Activated B cell treated with CpG ODN at 0.5 μM for 24 hours (primary cell): ENCODE measurements at regions of chr4 and their contacts with region 1.

Region 1: DNA sequence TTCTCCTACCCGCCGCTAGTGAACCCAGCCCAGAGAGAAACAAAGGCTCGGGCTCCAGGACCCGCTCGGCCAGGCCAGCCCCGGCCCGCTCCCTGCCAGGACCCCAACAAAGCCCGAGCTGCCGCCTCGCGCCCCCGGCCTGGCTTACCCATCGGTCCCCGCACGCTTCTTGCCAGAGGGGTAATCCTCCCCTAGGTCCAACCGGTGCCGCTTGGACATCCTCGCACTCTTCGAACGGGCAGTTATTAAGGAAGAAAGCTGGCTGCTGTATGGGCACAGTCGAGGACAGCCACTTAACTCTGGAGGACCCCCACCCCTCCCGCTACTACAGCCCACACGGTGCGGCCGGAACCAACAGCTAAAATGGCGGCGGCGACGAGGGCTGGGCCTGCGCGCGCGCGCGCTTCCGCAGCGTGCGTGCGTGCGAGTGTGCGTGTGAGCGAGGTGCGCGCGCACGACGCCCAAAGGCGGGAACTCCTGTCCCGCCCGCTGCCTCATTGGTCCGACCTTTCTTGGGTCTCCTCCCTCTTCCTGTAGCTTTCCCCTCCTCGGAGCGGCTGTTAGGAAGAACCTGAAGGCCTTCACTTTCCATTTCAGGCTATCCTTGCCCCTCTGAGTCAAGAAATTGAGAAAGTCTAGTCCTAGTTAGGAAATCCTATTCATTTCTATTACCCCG is at the start of gene DHX15:
- DNase-seq: peak; percentile 88
- ATAC-seq: peak; percentile 93
- H3K4me3 Mint-ChIP-seq: peak within 1 kb of the TSS; percentile 98
- H3K27ac Mint-ChIP-seq: peak within 1 kb of the TSS; percentile 91
- H3K4me1 Mint-ChIP-seq: peaks cover 39% of the 10 kb centered on the region
- H3K27me3 Mint-ChIP-seq: no peaks in the 10 kb centered on the region
- CTCF ChIP-seq: no peak
- total RNA-seq, gene DHX15: 145 and 163 TPM in 2 replicates

Region 2: GRCh38 chr4:24472514-24473308 is 111.6 kb before region 1 on chr4:
- CTCF ChIA-PET with region 1: no interaction called
- POLR2A ChIA-PET with region 1: no interaction called
- intact Hi-C with region 1: loop called (anchors 1 kb)
- DNase-seq: peak; percentile 39
- ATAC-seq: peak; percentile 75
- H3K4me3 Mint-ChIP-seq: peak overlapping the region; percentile 93
- H3K27ac Mint-ChIP-seq: peak overlapping the region; percentile 62
- H3K4me1 Mint-ChIP-seq: peaks cover 35% of the 10 kb centered on the region
- H3K27me3 Mint-ChIP-seq: peaks cover 57% of the 10 kb centered on the region
- CTCF ChIP-seq: no peak

Region 3: DNA sequence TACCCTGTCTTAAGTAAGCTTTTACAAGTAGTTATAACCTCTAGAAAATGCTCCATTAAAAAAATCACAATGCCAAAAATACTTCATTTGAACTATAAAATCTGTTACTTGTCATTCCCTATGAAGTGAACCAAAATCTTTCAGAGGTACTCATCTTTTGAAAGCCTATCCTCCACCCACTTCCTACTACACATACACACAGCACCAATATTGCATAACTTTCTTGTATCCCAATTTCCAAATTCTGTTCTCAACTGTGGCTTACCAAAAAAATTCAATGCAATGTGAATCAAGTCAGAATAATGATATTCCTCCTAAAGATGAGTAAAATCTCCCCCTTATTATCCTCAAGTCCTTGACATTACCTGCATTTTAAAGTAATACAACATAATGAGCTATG is 15.9 kb before region 1 on chr4:
- CTCF ChIA-PET with region 1: no interaction called
- POLR2A ChIA-PET with region 1: interaction called, 7 read pairs
- intact Hi-C with region 1: loop called (anchors 2 kb)
- DNase-seq: no peak
- ATAC-seq: no peak
- H3K4me3 Mint-ChIP-seq: no peak overlapping the region
- H3K27ac Mint-ChIP-seq: no peak overlapping the region
- H3K4me1 Mint-ChIP-seq: peaks cover 56% of the 10 kb centered on the region
- H3K27me3 Mint-ChIP-seq: no peaks in the 10 kb centered on the region
- CTCF ChIP-seq: no peak

Region 4: GRCh38 chr4:24664956-24665355 is 80.6 kb after region 1 on chr4:
- CTCF ChIA-PET with region 1: no interaction called
- POLR2A ChIA-PET with region 1: no interaction called
- intact Hi-C with region 1: no loop called
- DNase-seq: no peak
- ATAC-seq: no peak
- H3K4me3 Mint-ChIP-seq: no peak overlapping the region
- H3K27ac Mint-ChIP-seq: no peak overlapping the region
- H3K4me1 Mint-ChIP-seq: no peaks in the 10 kb centered on the region
- H3K27me3 Mint-ChIP-seq: peaks cover 22% of the 10 kb centered on the region
- CTCF ChIP-seq: no peak

Region 5: GRCh38 chr4:25234390-25235370 is 650.4 kb after region 1 on chr4:
- CTCF ChIA-PET with region 1: no interaction called
- POLR2A ChIA-PET with region 1: interaction called, 6 read pairs
- intact Hi-C with region 1: loop called (anchors 1 kb)
- DNase-seq: no peak
- ATAC-seq: peak; percentile 53
- H3K4me3 Mint-ChIP-seq: peak overlapping the region; percentile 90
- H3K27ac Mint-ChIP-seq: peak overlapping the region; percentile 95
- H3K4me1 Mint-ChIP-seq: peaks cover 47% of the 10 kb centered on the region
- H3K27me3 Mint-ChIP-seq: no peaks in the 10 kb centered on the region
- CTCF ChIP-seq: no peak

Region 6: DNA sequence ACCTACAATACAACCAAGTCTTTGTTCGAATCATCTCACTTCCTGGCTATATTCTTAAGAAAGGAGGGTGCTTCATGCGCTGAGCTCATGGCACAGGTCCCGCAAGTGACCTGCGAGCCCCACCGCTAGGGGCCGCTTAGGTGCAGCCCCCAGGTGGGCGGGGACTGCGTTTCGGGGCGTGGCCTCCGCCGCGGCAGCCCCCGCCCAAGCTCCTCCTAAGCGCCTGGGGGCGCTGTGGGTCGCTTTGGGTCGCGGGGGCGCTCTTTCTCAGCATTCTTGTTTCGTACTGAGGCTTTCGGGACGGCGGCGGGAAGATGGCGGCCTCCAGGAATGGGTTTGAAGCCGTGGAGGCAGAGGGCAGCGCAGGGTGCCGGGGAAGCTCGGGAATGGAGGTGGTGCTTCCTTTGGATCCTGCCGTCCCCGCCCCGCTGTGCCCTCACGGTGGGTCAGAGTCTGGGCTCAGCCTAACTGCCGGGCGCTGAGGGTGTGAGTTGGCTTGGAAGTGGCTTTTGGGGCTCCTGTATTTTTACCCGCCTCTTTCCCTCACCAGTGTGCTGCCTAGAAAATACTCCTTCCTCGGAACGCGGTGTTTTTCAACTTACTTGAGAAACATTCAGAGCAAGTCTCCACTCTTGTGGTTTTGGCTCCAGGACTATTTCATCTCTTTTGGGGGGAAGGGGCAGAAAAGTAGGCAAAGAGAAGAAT is 728.3 kb after region 1 on chr4 and contains the start of gene ZCCHC4:
- CTCF ChIA-PET with region 1: no interaction called
- POLR2A ChIA-PET with region 1: interaction called, 11 read pairs
- intact Hi-C with region 1: loop called (anchors 1 kb)
- DNase-seq: peak; percentile 95
- ATAC-seq: peak; percentile 99
- H3K4me3 Mint-ChIP-seq: peak within 1 kb of the TSS; percentile 98
- H3K27ac Mint-ChIP-seq: peak within 1 kb of the TSS; percentile 95
- H3K4me1 Mint-ChIP-seq: peaks cover 45% of the 10 kb centered on the region
- H3K27me3 Mint-ChIP-seq: no peaks in the 10 kb centered on the region
- CTCF ChIP-seq: peak; percentile 90
- total RNA-seq, gene ZCCHC4: 14.7 and 19.1 TPM in 2 replicates

Region 7: DNA sequence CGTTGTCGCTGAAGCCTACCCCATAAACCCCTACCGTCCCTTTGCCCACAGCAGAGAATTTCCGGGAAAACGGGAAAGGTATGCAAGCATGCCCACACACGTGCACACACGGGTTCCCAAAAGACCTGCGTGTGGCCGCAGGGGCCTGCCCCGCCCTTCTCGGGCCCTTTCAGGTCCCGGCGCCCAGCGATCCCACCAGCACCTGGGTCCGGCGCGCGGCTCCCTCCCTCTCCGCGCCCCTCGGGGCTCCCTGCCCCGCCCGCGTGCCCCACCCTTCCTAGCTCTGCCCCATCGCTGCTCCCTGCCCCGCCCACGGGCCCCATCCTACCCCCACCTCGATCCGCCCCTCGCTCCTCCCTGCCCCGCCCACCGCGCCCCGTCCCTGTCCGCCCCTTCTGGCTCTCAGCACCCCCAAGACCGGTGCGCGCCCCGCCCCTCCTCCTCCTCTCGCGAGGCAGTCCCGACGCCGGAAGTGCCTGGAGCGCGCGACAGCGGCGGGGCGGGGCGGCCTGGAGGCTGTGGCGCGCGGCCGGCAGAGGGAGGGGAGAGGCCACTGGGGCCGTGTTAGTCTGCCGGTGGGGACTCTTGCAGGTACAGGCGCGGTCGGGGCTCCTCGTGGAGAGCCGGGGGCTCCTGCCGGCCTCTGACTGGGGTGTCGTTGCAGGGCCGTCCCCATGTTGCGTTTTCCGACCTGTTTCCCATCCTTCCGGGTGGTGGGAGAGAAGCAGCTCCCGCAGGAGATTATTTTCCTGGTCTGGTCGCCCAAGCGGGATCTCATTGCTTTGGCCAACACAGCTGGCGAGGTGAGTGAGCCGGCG is 792.6 kb after region 1 on chr4 and contains the start of gene ANAPC4:
- CTCF ChIA-PET with region 1: no interaction called
- POLR2A ChIA-PET with region 1: interaction called, 12 read pairs
- intact Hi-C with region 1: loop called (anchors 1 kb)
- DNase-seq: peak; percentile 95
- ATAC-seq: peak; percentile 94
- H3K4me3 Mint-ChIP-seq: no peak within 1 kb of the TSS
- H3K27ac Mint-ChIP-seq: peak within 1 kb of the TSS; percentile 81
- H3K4me1 Mint-ChIP-seq: peaks cover 5% of the 10 kb centered on the region
- H3K27me3 Mint-ChIP-seq: no peaks in the 10 kb centered on the region
- CTCF ChIP-seq: no peak
- total RNA-seq, gene ANAPC4: 36.8 and 37.0 TPM in 2 replicates